ENCODE measurements at regions of chr13 and their contacts with region 1.

Region 1: DNA sequence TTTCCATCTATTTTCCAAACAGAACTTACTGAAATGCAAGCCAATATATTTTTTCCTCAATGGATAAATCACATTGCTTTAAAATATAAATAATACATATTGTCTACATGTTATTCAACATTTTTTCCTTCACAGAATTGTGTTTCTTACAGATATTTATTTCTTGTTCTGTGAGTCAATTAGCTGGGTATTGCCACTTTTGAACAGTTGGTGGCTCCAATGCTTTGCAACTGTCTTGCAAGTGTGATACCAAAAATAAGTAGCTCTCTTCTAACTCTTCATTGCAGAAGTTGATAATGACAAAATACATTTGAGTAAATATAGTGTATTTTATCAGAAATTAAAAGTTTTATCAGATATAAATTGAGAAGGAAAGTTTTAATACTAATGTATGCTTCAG is 17.1 kb upstream of the GPC5 start:
- DNase-seq: no peak
- H3K4me3 ChIP-seq: no peak overlapping the region
- H3K4me3 Mint-ChIP-seq: no peak overlapping the region
- H3K27ac Mint-ChIP-seq: no peak overlapping the region
- H3K4me1 ChIP-seq: no peaks in the 10 kb centered on the region
- H3K4me1 Mint-ChIP-seq: no peaks in the 10 kb centered on the region
- H3K27me3 ChIP-seq: no peaks in the 10 kb centered on the region
- H3K27me3 Mint-ChIP-seq: peaks cover 7% of the 10 kb centered on the region
- CTCF ChIP-seq: peak; percentile 52 to 54

Region 2: DNA sequence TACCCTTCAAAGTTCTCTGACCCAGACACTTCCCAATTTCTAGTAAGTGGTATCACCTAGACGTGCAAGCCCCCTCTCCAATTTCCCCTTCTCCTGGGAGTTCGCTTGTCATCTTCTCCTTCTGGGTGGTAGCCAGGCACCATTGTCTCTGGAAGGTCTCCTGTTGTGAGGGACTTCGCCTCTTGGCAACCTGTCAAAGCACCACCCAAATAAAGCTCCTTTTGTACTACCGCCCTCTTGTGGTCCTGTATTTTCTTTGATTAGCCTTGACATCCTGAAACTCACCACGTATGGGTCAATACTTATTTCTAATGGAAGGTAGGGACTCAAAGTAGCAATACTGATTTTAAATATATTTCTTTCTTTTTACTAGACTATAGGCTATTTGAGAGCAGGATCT is 25.2 kb after region 1 on chr13:
- CTCF ChIA-PET with region 1: interaction called, 15 read pairs
- POLR2A ChIA-PET with region 1: no interaction called
- intact Hi-C with region 1: loop called (anchors 1 kb)
- DNase-seq: peak; percentile 50 to 73
- H3K4me3 ChIP-seq: no peak overlapping the region
- H3K4me3 Mint-ChIP-seq: no peak overlapping the region
- H3K27ac Mint-ChIP-seq: peak overlapping the region; percentile 16
- H3K4me1 ChIP-seq: no peaks in the 10 kb centered on the region; the same call in 1 of the 2 replicates
- H3K4me1 Mint-ChIP-seq: no peaks in the 10 kb centered on the region
- H3K27me3 ChIP-seq: no peaks in the 10 kb centered on the region
- H3K27me3 Mint-ChIP-seq: peaks cover 3% of the 10 kb centered on the region
- CTCF ChIP-seq: peak; percentile 62 to 65

Region 3: DNA sequence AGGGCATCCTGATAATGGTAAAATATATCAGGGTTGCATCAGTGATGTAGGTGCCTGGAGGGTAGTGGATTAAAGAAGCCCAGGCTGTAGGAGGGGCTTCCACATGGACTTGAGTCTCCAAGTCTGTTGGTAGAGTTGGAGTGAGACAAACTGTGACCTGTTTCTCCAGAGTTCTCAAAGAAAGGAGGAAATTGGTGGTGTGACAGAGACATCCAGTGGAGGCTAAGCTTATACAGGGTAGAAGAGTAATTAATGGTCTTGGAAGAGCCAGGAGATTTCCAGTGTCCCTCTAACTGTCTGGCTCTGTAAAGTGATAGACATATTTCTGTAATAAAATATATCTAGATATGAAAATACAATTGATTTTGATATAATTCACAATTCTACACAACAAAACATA is 78.1 kb after region 1 on chr13:
- CTCF ChIA-PET with region 1: interaction called, 5 read pairs
- POLR2A ChIA-PET with region 1: no interaction called
- intact Hi-C with region 1: loop called (anchors 1 kb)
- DNase-seq: peak in 1 of 2 experiments; percentile 6
- H3K4me3 ChIP-seq: no peak overlapping the region
- H3K4me3 Mint-ChIP-seq: no peak overlapping the region
- H3K27ac Mint-ChIP-seq: no peak overlapping the region
- H3K4me1 ChIP-seq: no peaks in the 10 kb centered on the region
- H3K4me1 Mint-ChIP-seq: no peaks in the 10 kb centered on the region
- H3K27me3 ChIP-seq: no peaks in the 10 kb centered on the region
- H3K27me3 Mint-ChIP-seq: no peaks in the 10 kb centered on the region
- CTCF ChIP-seq: no peak

Region 4: DNA sequence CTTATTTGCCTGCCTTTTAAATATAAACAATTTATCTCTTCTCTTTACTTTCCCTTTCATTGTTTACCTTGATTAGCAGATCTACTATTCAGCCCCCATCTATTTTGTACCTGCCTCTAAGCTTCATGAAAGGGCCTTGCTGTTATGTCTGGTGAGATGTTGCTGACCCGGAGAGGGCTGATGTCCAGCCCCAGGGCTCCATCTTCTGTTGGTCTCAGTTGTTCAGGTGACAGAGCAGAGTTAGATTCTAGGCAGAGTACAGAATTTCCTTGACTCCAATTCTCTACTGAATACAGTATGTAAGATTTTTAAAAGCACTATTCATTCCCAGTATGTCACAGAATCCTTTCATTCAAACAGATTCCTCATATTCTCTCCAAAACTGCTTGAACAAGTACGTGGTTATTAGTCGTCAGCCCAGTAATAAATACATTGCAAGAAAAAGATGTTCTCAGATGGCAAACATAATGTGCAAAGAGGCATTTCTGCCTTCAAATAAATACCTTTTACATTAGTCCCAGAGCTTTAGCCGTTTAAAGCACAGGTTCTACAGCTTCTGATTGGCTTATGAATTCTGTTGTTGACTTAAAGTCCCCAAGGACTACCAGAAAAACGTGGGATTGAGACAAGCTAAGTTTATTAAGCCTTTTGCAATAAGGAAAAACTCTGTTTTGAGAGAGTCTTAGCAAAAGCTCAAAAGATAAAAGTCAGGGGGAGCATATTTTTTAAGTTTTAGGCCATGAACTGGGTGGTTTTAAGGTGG is 176.1 kb after region 1 on chr13:
- CTCF ChIA-PET with region 1: interaction called, 3 read pairs
- POLR2A ChIA-PET with region 1: no interaction called
- intact Hi-C with region 1: loop called (anchors 10 kb)
- DNase-seq: no peak
- H3K4me3 ChIP-seq: no peak overlapping the region
- H3K4me3 Mint-ChIP-seq: no peak overlapping the region
- H3K27ac Mint-ChIP-seq: no peak overlapping the region
- H3K4me1 ChIP-seq: 0 out of 2 replicates have a peak, but pooled peaks cover 6% of the 10 kb centered on the region
- H3K4me1 Mint-ChIP-seq: no peaks in the 10 kb centered on the region
- H3K27me3 ChIP-seq: no peaks in the 10 kb centered on the region
- H3K27me3 Mint-ChIP-seq: no peaks in the 10 kb centered on the region
- CTCF ChIP-seq: no peak

Region 5: GRCh38 chr13:91647361-91647990 is 266.1 kb after region 1 on chr13:
- CTCF ChIA-PET with region 1: interaction called, 4 read pairs
- POLR2A ChIA-PET with region 1: no interaction called
- intact Hi-C with region 1: loop called (anchors 1 kb)
- DNase-seq: peak; percentile 42 to 54
- H3K4me3 ChIP-seq: no peak overlapping the region
- H3K4me3 Mint-ChIP-seq: no peak overlapping the region
- H3K27ac Mint-ChIP-seq: no peak overlapping the region
- H3K4me1 ChIP-seq: peaks cover 2% of the 10 kb centered on the region; the same call in 1 of the 2 replicates
- H3K4me1 Mint-ChIP-seq: no peaks in the 10 kb centered on the region
- H3K27me3 ChIP-seq: no peaks in the 10 kb centered on the region
- H3K27me3 Mint-ChIP-seq: no peaks in the 10 kb centered on the region
- CTCF ChIP-seq: peak; percentile 56 to 60

Region 6: GRCh38 chr13:91722267-91722884 is 341.0 kb after region 1 on chr13:
- CTCF ChIA-PET with region 1: interaction called, 4 read pairs
- POLR2A ChIA-PET with region 1: no interaction called
- intact Hi-C with region 1: loop called (anchors 2 kb)
- DNase-seq: peak in 1 of 2 experiments; percentile 21
- H3K4me3 ChIP-seq: no peak overlapping the region
- H3K4me3 Mint-ChIP-seq: no peak overlapping the region
- H3K27ac Mint-ChIP-seq: no peak overlapping the region
- H3K4me1 ChIP-seq: peaks cover 43% of the 10 kb centered on the region
- H3K4me1 Mint-ChIP-seq: peaks cover 13% of the 10 kb centered on the region
- H3K27me3 ChIP-seq: no peaks in the 10 kb centered on the region
- H3K27me3 Mint-ChIP-seq: no peaks in the 10 kb centered on the region
- CTCF ChIP-seq: peak; percentile 53 to 63

Measured in Caco-2 (cell line).